HAP-1 (cell line): ENCODE measurements at regions of chr1 and their contacts with region 1.

Region 1: DNA sequence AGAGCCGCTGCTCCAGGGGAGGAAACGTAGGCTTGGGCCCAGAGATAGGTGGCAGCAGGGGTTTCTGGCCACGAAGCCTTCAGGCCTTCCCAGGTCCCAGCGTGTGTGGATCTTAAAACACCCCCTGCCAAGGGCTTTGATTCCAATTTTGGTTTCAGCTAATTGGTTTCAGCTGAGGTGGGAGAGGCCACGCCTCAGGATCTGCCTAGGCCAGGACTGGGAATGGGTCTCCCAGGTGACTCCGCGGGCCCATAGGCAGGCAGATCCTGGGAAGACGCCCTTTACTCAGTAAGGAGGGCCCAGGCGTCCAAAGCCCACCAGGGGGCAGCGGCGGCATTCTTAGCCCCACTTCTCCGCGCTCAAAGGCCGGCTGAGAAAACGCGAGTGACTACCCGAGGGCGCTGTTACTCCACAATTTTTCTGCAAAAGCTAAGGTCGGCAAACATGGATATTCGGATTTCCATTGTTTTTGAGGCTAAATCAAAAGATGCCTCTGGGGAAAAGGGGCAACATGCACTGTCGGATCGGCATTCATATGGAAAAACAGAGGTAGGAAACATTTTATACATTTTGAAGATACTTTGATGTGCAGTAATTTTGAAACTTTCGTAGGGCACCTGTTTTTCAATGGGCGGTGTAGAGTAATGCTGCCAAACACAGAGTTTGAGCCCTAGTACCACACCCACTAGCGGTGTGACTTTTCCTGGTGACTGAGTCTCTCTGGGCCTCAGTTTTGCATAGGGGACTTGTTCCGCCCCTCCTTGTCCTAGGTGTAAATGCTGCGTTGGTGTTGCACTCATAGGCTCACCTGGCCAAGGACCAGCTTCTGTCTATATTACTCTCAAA is 31.8 kb upstream of the BCL10 start:
- DNase-seq: peak; percentile 92 to 96
- H3K4me3 ChIP-seq: peak overlapping the region; percentile 3
- H3K4me1 ChIP-seq: peaks cover 13% of the 10 kb centered on the region
- H3K27me3 ChIP-seq: no peaks in the 10 kb centered on the region

Region 2: GRCh38 chr1:84620720-84621313 is 687.4 kb before region 1 on chr1:
- in situ Hi-C with region 1: no loop called
- DNase-seq: peak; percentile 57 to 87
- H3K4me3 ChIP-seq: peak overlapping the region; percentile 46
- H3K4me1 ChIP-seq: peaks cover 8% of the 10 kb centered on the region
- H3K27me3 ChIP-seq: no peaks in the 10 kb centered on the region

Region 3: DNA sequence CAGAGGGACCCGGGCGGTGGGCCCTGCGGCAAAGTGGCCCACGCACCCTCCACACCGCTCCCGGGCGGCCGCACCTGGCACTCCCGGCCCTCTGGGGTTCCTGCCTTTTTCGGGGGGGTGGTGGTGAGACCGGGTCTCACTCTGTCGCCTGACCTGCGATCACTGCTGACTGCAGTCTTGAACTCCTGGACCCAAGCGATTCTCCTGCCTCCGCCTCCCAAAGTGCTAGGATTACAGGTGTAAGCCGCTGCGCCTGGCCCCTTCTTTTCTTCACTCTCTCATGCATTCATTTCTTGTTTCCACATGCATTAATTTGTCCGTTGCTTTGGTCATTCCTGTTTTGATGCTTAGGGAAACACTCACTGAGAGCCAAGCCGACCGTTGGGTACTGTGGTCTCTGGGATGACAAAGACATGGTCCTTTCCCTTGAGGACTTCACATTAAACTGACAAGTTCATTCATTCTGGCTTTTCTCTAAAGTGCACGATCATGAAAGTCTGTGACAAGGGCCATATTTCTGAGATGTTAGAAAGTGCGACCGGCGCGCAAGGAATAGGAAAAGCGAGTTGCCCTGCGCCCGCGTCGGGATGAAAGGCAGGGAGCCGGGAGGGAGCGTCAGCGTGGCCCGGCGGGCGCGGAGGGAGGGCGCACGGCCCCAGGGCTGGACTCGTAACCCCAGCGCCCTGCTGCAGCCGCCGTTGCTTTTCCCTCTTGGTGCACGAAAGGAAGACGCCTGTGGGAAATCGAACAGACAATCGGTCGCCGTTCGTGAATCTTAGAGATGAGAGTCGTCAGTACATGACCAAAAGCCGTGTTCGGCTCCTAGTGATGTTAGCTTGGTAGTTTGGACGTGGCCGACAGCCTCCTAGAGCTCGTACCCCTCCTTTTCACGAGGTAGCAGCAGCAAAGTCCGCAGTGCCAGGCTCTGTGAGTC is 310.3 kb before region 1 on chr1:
- in situ Hi-C with region 1: no loop called
- DNase-seq: peak; percentile 32 to 66
- H3K4me3 ChIP-seq: peak overlapping the region; percentile 59
- H3K4me1 ChIP-seq: peaks cover 20% of the 10 kb centered on the region
- H3K27me3 ChIP-seq: no peaks in the 10 kb centered on the region

Region 4: GRCh38 chr1:85398391-85399064 is 90.3 kb after region 1 on chr1:
- in situ Hi-C with region 1: loop called (anchors 5 kb)
- DNase-seq: peak in 1 of 2 experiments; percentile 51
- H3K4me3 ChIP-seq: no peak overlapping the region
- H3K4me1 ChIP-seq: peaks cover 72% of the 10 kb centered on the region
- H3K27me3 ChIP-seq: no peaks in the 10 kb centered on the region

Region 5: DNA sequence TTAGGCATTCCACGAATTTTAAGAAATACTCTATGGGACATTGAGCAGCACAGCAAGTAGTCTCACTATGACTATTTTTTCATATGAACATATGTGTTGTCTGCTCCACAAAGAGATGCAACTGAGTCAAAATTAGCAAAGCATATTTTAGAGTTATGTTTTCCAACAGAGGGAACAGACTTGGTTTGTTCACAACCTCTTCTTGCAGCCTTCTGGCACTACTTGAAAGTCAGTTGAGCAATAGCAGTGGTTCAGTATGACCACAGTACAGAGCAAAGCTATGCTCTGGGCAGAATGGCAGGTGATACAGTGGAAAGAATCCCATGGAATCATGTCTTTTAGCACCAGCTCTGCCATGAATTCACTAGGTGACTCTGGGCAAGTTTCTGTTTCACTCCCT is 277.6 kb after region 1 on chr1:
- in situ Hi-C with region 1: loop called (anchors 5 kb)
- DNase-seq: no peak
- H3K4me3 ChIP-seq: no peak overlapping the region
- H3K4me1 ChIP-seq: peaks cover 27% of the 10 kb centered on the region
- H3K27me3 ChIP-seq: no peaks in the 10 kb centered on the region

Region 6: DNA sequence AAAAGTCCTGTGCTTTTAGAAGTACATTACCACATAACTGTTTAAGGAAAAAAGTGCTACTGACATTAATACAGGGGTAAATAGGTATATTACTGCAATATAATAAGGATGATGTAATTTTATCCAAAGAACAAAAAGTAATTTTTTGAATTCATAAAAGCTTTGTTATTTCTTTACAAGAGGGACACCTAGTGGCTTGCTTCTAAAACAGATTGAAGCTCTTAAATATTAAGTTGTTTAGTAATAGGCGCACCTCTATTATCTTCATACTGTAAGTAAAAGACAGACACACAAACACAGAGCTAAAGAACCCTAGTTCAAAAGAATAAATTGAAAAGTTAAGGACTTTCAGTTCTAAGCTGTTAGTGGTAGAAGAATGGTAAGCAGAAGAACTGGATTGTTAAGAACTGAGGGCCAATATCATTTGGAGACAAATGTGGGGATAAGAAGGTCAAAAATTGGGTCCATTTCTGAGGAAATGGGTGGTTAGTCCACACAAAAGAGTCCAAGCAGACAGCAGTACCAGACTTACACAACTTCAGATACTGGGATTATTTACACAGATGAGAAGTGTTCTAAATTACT is 384.6 kb after region 1 on chr1:
- in situ Hi-C with region 1: loop called (anchors 5 kb)
- DNase-seq: peak in 1 of 2 experiments; percentile 50
- H3K4me3 ChIP-seq: no peak overlapping the region
- H3K4me1 ChIP-seq: no peaks in the 10 kb centered on the region
- H3K27me3 ChIP-seq: no peaks in the 10 kb centered on the region

Region 7: GRCh38 chr1:86018283-86018923 is 710.2 kb after region 1 on chr1:
- in situ Hi-C with region 1: loop called (anchors 25 kb)
- DNase-seq: peak; percentile 48 to 53
- H3K4me3 ChIP-seq: no peak overlapping the region
- H3K4me1 ChIP-seq: no peaks in the 10 kb centered on the region
- H3K27me3 ChIP-seq: no peaks in the 10 kb centered on the region